GM12878 (cell line): ENCODE measurements at regions of chr16 and their contacts with region 1.

Region 1: DNA sequence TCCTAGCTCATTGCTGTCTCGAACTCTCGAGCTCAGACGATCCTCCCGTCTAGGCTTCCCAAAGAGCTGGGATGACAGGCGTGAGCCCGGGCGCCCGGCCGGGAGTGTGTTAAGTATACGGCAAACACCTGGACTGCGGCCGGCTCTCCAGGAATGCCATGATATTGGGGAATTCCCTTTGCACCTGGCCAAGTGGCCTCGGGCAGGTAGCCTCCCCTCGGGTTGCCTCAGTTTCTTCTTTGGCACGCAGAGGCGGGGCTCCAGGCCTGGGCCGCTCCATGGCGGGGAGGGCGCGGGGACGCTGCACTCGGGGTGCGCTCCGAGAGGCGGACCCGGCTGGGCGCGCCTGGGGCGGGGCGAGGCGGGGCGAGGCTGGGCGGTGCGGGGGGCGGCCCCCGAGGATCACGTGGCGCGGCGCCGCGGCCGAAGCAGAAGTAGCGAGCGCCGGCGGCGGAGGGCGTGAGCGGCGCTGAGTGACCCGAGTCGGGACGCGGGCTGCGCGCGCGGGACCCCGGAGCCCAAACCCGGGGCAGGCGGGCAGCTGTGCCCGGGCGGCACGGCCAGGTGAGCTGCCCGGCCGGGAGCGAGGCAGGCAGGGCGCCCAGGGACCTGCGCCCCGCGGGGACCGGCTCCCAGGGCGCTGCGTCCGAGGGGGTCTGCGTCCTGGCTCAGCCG is at the start of gene PLCG2:
- DNase-seq: no peak
- ATAC-seq: peak; percentile 83
- H3K4me3 ChIP-seq: peak within 1 kb of the TSS; percentile 99
- H3K27ac ChIP-seq: peak within 1 kb of the TSS; percentile 86
- H3K4me1 ChIP-seq: peaks cover 28% of the 10 kb centered on the region
- H3K27me3 ChIP-seq: no peaks in the 10 kb centered on the region
- CTCF ChIP-seq: no peak
- EP300 ChIP-seq: no peak
- POLR2A ChIP-seq: peak; percentile 83
- RAD21 ChIP-seq: no peak
- polyA plus RNA-seq, gene PLCG2: 47.6 to 53.9 TPM

Region 2: DNA sequence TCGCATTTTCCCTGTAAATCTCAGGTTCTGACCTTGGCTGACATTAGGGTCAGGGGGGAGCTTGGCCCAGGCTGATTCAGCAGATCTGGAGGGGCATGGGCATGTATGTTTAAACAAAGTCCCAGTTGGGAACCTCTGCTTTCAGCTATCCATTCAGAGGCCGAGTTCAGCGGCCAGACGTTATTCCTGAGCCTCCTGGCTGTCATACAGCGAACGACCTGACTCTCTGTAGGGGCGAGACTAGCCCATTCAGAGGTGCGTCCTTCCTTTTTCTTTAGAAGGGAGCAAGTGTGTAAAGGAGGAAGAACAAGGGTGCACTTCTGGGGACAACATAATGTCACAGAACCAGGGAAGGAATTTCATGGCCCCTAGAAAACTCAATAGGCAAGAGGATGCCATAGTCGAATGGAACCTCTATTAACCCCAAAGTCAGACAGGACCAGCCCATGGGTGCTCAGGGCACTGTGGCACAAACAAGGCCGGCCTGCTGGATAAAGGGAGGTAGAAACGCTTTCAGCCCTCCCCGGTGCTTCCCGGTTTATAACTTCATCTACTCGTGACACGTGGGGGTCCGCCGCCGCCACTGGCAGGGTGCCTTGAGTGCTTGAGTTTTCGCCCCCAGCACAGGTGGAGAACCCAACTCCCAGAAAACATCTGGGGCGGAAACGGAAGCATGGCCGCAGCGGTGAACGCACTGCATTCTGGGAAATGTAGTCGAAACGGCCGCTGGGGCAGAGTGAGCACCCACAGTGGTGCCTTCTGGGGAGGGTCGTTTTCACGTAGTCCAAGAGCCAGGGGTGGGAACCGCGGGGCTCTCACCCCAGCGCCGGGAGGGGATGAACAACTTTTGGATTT is 33.1 kb before region 1 on chr16:
- CTCF ChIA-PET with region 1: interaction called, 13 read pairs
- POLR2A ChIA-PET with region 1: interaction called, 14 read pairs
- RAD21 ChIA-PET with region 1: interaction called, 25 read pairs
- SMC1A ChIA-PET with region 1: interaction called, 65 read pairs
- in situ Hi-C with region 1: no loop called
- intact Hi-C with region 1: loop called (anchors 5 kb)
- DNase-seq: no peak
- ATAC-seq: peak; percentile 91
- H3K4me3 ChIP-seq: peak overlapping the region; percentile 59
- H3K27ac ChIP-seq: peak overlapping the region; percentile 47
- H3K4me1 ChIP-seq: peaks cover 30% of the 10 kb centered on the region
- H3K27me3 ChIP-seq: no peaks in the 10 kb centered on the region
- CTCF ChIP-seq: no peak
- EP300 ChIP-seq: no peak
- POLR2A ChIP-seq: peak; percentile 70
- RAD21 ChIP-seq: no peak

Region 3: DNA sequence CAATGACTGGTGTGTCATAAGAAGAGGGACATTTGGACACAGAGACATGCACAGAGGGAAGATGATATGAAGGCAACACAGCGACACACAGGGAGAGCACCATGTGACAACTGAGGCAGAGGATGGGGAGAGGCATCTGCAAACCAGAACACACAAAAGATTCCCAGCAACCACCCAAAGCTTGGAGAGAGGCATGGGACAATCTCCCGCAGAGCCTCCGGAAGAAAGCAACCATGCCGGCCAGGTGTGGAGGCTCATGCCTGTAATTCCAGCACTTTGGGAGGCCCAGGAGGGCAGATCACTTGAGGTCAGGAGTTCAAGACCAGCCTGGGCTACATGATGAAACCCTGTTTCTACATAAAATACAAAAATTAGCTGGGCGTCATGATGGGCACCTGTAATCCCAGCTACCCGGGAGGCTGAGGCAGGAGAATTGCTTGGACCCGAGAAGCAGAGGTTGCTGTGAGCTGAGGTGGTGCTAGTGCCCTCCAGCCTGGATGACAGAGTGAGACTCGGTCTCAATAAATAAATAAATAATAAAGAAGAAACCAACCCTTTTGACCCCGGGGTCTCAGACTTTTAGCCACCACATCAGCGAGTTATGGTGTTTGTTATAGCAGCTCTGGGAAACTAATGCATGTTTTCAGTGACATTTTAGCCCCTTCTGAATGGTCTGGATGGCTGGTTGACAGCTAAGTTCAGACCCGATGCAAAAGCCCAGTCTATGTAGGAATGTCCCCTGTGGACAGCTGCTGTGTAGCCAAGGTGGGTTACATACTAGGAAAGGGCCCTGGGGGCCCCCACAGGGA is 13.7 kb before region 1 on chr16:
- CTCF ChIA-PET with region 1: interaction called, 9 read pairs
- POLR2A ChIA-PET with region 1: interaction called, 7 read pairs
- RAD21 ChIA-PET with region 1: interaction called, 5 read pairs
- SMC1A ChIA-PET with region 1: interaction called, 15 read pairs
- in situ Hi-C with region 1: no loop called
- intact Hi-C with region 1: no loop called
- DNase-seq: no peak
- ATAC-seq: no peak
- H3K4me3 ChIP-seq: no peak overlapping the region
- H3K27ac ChIP-seq: no peak overlapping the region
- H3K4me1 ChIP-seq: peaks cover 7% of the 10 kb centered on the region
- H3K27me3 ChIP-seq: no peaks in the 10 kb centered on the region
- CTCF ChIP-seq: no peak
- EP300 ChIP-seq: no peak
- POLR2A ChIP-seq: no peak
- RAD21 ChIP-seq: no peak

Region 4: DNA sequence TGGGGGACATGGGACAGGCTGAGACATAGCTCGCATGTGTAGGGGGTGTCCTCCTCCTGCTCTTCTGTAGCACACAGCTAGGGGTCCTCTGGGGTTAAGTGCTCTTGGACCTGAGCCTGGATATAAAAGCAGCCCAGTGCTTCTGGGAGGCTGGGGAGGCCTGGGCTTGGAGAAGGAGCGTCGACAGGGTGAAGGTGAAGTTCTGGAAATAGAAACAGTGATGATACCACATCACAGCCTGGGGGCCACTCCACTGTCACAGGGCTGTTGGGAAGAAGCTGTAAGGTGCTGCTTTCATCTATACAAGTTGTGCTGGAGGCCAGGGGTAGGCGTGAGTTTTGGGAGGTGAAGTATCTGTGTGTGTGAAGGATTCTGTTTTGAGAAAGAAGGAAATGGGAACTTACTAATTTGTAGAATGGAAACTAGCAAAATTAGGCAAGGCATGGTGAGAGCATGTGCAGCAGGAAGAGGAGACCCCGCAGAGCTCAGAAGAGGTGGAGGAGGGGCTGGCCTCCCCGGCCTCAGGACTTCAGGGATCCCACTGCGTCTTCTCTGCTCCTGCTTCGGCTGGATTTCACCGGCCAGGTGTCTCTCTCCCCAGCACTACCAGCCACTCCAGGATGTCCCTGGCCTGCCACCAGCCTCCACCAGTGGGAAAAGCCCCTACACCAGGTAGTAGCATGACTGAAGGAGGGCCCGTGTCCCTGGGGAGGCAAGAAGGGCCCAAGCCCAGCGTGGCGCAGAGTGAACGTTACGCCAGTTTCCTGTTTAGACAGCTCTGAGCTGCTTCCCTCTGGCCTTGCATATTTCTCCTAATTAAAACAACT is 19.5 kb after region 1 on chr16:
- CTCF ChIA-PET with region 1: interaction called, 16 read pairs
- POLR2A ChIA-PET with region 1: interaction called, 22 read pairs
- RAD21 ChIA-PET with region 1: interaction called, 74 read pairs
- SMC1A ChIA-PET with region 1: interaction called, 15 read pairs
- in situ Hi-C with region 1: no loop called
- intact Hi-C with region 1: no loop called
- DNase-seq: peak; percentile 97
- ATAC-seq: peak; percentile 76
- H3K4me3 ChIP-seq: peak overlapping the region; percentile 62
- H3K27ac ChIP-seq: peak overlapping the region; percentile 98
- H3K4me1 ChIP-seq: peaks cover 52% of the 10 kb centered on the region
- H3K27me3 ChIP-seq: no peaks in the 10 kb centered on the region
- CTCF ChIP-seq: peak in 2 of 3 experiments; percentile 27 to 36; a peak in 4 of 6 replicates
- EP300 ChIP-seq: peak; percentile 80 to 84; a peak in 3 of 4 replicates
- POLR2A ChIP-seq: peak; percentile 50; the same call in 1 of the 2 replicates
- RAD21 ChIP-seq: no peak; the same call in 1 of the 2 replicates

Region 5: GRCh38 chr16:81817789-81818567 is 39.0 kb after region 1 on chr16:
- CTCF ChIA-PET with region 1: interaction called, 13 read pairs
- POLR2A ChIA-PET with region 1: interaction called, 46 read pairs
- RAD21 ChIA-PET with region 1: interaction called, 67 read pairs
- SMC1A ChIA-PET with region 1: interaction called, 58 read pairs
- in situ Hi-C with region 1: no loop called
- intact Hi-C with region 1: loop called (anchors 2 kb)
- DNase-seq: peak; percentile 79
- ATAC-seq: peak; percentile 68
- H3K4me3 ChIP-seq: peak overlapping the region; percentile 38; the same call in 1 of the 2 replicates
- H3K27ac ChIP-seq: peak overlapping the region; percentile 98
- H3K4me1 ChIP-seq: peaks cover 85% of the 10 kb centered on the region
- H3K27me3 ChIP-seq: no peaks in the 10 kb centered on the region
- CTCF ChIP-seq: no peak
- EP300 ChIP-seq: peak; percentile 18 to 79; a peak in 3 of 4 replicates
- POLR2A ChIP-seq: peak; percentile 58
- RAD21 ChIP-seq: no peak; the same call in 1 of the 2 replicates

Region 6: GRCh38 chr16:81838794-81839193 is 59.8 kb after region 1 on chr16:
- CTCF ChIA-PET with region 1: interaction called, 5 read pairs
- POLR2A ChIA-PET with region 1: interaction called, 12 read pairs
- RAD21 ChIA-PET with region 1: interaction called, 8 read pairs
- SMC1A ChIA-PET with region 1: interaction called, 10 read pairs
- in situ Hi-C with region 1: no loop called
- intact Hi-C with region 1: no loop called
- DNase-seq: peak; percentile 57
- ATAC-seq: peak; percentile 64
- H3K4me3 ChIP-seq: no peak overlapping the region
- H3K27ac ChIP-seq: peak overlapping the region; percentile 54
- H3K4me1 ChIP-seq: peaks cover 87% of the 10 kb centered on the region
- H3K27me3 ChIP-seq: no peaks in the 10 kb centered on the region
- CTCF ChIP-seq: no peak
- EP300 ChIP-seq: peak; percentile 26 to 53; a peak in 2 of 4 replicates
- POLR2A ChIP-seq: peak; percentile 44; the same call in 1 of the 2 replicates
- RAD21 ChIP-seq: no peak